Activated B cell treated with CpG ODN at 0.5 μM for 24 hours (primary cell): ENCODE measurements at regions of chr4 and their contacts with region 1.

Region 1: GRCh38 chr4:55980725-55981124 is 32.0 kb downstream of the CEP135 start:
- DNase-seq: no peak
- ATAC-seq: peak; percentile 45
- H3K4me3 Mint-ChIP-seq: peak overlapping the region; percentile 72
- H3K27ac Mint-ChIP-seq: peak overlapping the region; percentile 85
- H3K4me1 Mint-ChIP-seq: peaks cover 37% of the 10 kb centered on the region
- H3K27me3 Mint-ChIP-seq: no peaks in the 10 kb centered on the region
- CTCF ChIP-seq: no peak

Region 2: DNA sequence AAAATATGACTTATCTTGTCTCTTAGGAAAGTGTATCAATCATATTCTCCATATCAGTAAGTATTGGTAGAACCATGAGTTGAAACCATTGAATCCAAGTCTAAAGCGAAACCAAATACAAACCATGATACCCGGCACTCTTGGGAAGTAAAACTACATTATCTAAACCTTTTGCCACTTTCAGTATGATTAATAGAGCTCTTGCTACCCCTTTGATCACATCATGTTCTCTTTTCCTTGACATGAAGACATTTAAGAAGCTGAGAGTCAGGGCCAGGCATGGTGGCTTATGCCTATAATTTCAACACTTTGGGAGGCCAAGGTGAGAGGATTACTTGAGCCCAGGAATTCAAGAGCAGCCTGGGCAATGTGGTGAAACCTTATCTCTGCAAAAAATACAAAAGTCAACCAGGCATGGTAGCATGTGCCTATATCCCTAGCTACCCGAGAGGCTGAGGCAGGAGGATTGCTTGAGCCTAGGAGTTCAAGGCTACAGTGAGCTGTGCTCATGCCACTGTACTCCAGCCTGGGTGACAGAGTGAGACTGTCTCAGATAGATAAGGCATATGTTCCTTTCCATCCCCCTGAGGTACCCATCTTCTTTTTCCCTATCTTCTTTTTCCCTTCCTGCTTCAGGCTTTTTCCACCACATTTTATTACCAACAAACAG is 13.4 kb after region 1 on chr4:
- CTCF ChIA-PET with region 1: interaction called, 4 read pairs
- POLR2A ChIA-PET with region 1: interaction called, 4 read pairs
- intact Hi-C with region 1: loop called (anchors 2 kb)
- DNase-seq: no peak
- ATAC-seq: peak; percentile 69
- H3K4me3 Mint-ChIP-seq: peak overlapping the region; percentile 3
- H3K27ac Mint-ChIP-seq: peak overlapping the region; percentile 59
- H3K4me1 Mint-ChIP-seq: peaks cover 36% of the 10 kb centered on the region
- H3K27me3 Mint-ChIP-seq: no peaks in the 10 kb centered on the region
- CTCF ChIP-seq: no peak